CD8-positive, alpha-beta T cell (primary cell): ENCODE measurements at regions of chr18 and their contacts with region 1.

Region 1: DNA sequence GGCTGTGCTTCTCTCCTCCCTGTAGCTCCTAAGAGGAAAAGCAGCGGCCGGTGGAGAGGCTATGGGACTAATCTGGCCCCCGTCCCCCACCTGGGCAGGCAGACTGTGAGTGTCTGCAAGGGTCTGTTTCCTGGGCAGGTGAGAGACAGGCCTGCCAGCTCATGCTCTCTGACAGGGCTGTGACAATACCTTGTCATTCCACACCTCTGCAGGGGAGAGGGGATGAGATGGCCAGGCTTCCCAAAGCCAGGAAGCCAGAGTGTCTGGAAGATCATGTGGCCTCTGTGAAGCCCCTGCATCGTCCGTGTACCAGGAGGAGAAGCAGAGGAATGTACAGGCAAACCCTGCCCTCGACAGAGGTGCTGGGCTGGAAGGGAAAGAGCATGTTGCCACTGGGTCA is 142.5 kb upstream of the GATA6 start:
- DNase-seq: no peak
- ATAC-seq: no peak
- H3K4me3 ChIP-seq: no peak overlapping the region
- H3K4me3 Mint-ChIP-seq: no peak overlapping the region
- H3K27ac ChIP-seq: no peak overlapping the region
- H3K27ac Mint-ChIP-seq: no peak overlapping the region
- H3K4me1 ChIP-seq: no peaks in the 10 kb centered on the region
- H3K4me1 Mint-ChIP-seq: no peaks in the 10 kb centered on the region
- H3K27me3 ChIP-seq: no peaks in the 10 kb centered on the region
- H3K27me3 Mint-ChIP-seq: peaks cover 3% of the 10 kb centered on the region
- CTCF ChIP-seq: no peak

Region 2: DNA sequence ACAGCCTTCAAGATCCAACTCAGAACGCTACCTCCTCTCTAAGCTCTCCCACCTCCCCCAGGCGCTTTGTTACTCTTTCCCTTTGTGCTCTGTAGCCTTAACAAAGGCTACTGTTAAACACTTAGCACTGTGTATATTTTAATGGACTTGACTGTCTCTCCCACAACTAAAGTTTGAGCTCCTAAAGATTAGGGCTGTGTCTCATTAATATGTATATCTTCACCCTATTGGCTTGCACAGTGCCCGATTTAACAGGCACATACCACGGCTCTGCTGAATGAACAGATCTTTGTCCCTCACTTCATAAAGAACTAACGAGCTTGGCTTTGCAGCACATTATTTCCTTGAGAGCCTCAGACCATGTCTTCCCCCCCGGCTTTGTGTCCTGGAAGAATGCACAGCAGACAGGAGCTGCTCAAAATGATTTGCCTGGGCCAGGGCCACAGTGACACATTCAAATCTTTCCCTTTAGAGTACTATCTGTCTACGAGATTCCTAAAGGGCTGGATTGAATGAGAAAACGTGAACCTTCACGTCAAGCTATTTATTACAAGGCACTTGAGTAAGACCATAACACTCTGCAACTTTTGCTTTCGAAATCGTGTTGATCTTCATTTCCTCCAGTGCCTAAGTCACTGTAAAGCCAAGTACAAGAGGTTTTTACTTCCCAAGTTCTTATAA is 344.4 kb before region 1 on chr18:
- CTCF ChIA-PET with region 1: no interaction called
- POLR2A ChIA-PET with region 1: no interaction called
- intact Hi-C with region 1: no loop called
- DNase-seq: peak in 6 of 9 experiments; percentile 5 to 78 (median 46)
- ATAC-seq: peak; percentile 91
- H3K4me3 ChIP-seq: peak overlapping the region; percentile 56 to 58
- H3K4me3 Mint-ChIP-seq: no peak overlapping the region
- H3K27ac ChIP-seq: peak overlapping the region; percentile 75 to 90
- H3K27ac Mint-ChIP-seq: no peak overlapping the region
- H3K4me1 ChIP-seq: no peaks in the 10 kb centered on the region
- H3K4me1 Mint-ChIP-seq: peaks cover 24% of the 10 kb centered on the region
- H3K27me3 ChIP-seq: no peaks in the 10 kb centered on the region
- H3K27me3 Mint-ChIP-seq: no peaks in the 10 kb centered on the region
- CTCF ChIP-seq: no peak

Region 3: DNA sequence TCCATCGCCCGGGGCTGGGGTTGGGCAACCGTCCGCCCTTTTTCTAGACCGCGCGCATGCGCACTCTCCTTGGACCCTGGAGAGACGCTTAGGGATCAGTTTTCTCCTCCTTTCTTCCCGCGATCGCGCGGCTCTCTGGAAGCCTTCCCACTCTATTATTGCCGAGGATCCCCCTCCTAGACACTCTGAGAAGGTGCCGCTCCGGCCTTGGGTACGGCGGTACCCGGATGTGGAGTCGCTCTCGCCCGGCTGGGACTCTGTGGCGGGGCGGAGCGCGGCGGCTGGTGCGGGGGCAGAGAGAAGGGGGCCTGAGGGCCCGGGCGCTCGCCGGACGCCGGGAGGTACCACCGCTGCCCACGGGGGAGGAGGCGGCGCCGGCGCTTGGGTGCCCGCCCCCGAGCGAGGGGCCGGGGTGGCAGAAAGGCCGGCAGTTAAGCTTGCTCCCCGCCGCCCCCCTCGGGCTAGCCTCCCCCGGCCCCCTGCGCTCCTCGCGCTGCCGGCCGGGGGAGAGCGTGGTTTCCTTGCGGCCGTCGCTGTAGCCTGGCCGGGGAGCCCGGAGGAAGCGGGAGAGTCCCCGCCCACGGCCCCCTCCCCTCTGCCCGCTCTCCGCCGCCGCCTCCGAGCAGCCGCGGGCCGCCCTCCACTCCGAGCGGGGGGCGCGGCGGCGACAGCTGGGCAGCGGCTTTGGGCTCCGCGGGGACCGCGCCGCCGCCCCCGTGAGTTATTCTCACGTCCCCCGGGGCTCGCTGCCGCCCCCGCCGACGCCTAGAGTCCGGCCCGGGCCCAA is 286.0 kb before region 1 on chr18 and contains the start of gene MIB1:
- CTCF ChIA-PET with region 1: no interaction called
- POLR2A ChIA-PET with region 1: no interaction called
- intact Hi-C with region 1: no loop called
- DNase-seq: peak; percentile 22 to 100 (median 98)
- ATAC-seq: peak; percentile 56
- H3K4me3 ChIP-seq: peak within 1 kb of the TSS; percentile 71 to 93
- H3K4me3 Mint-ChIP-seq: peak within 1 kb of the TSS; percentile 97
- H3K27ac ChIP-seq: peak within 1 kb of the TSS; percentile 75 to 78
- H3K27ac Mint-ChIP-seq: peak within 1 kb of the TSS; percentile 96
- H3K4me1 ChIP-seq: peaks cover 20% of the 10 kb centered on the region
- H3K4me1 Mint-ChIP-seq: peaks cover 36% of the 10 kb centered on the region
- H3K27me3 ChIP-seq: no peaks in the 10 kb centered on the region
- H3K27me3 Mint-ChIP-seq: no peaks in the 10 kb centered on the region
- CTCF ChIP-seq: no peak
- total RNA-seq, gene MIB1: 8.7 to 8.9 TPM

Region 4: GRCh38 chr18:22013993-22014392 is 12.9 kb before region 1 on chr18:
- CTCF ChIA-PET with region 1: no interaction called
- POLR2A ChIA-PET with region 1: no interaction called
- intact Hi-C with region 1: loop called (anchors 1 kb)
- DNase-seq: no peak
- ATAC-seq: no peak
- H3K4me3 ChIP-seq: no peak overlapping the region
- H3K4me3 Mint-ChIP-seq: no peak overlapping the region
- H3K27ac ChIP-seq: no peak overlapping the region
- H3K27ac Mint-ChIP-seq: no peak overlapping the region
- H3K4me1 ChIP-seq: no peaks in the 10 kb centered on the region
- H3K4me1 Mint-ChIP-seq: no peaks in the 10 kb centered on the region
- H3K27me3 ChIP-seq: no peaks in the 10 kb centered on the region
- H3K27me3 Mint-ChIP-seq: peaks cover 4% of the 10 kb centered on the region
- CTCF ChIP-seq: no peak